Activated naive CD4-positive, alpha-beta T cell treated with anti-CD3 and anti-CD28 coated beads for 36 hours (primary cell): ENCODE measurements at regions of chr1 and their contacts with region 1.

Region 1: DNA sequence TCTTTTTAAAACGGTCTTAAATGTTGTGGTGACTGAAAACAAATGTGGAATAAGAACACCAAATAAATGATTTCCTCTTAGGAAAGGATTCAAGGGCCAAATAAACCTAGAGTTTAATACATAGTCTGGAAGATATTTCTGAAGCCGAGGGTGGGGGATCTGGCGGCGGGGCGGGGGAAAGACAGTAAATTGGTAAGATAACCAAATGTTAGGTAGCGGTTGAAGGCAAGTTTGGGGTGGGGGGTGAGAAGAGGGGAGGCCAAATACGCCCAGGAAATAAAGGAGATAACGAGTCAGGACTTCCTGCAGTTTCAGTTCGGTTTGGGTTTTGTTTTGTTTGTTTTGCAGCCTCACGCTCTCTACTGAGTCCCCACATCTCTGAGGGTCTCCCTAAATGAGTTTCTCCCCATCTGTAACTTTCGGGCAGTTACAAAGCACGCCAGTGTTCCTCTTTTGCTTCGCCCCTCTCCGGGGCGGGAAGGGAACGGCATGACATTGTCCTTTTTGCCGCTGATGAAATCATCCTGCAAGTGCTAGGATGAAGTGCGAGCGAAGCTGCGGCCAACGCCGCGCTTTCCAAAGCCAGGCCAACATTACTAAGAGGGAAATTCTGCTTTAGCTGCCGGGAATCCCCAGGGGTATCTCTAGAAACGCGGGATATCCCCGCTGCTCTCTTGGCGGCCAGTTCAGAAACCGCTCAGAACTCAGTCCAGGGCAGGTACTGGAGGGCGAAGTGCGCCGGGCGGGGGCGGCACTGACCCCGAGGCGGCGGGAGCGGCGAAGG is 844 bp downstream of the NIBAN1 start:
- DNase-seq: peak; percentile 84
- H3K4me3 Mint-ChIP-seq: peak overlapping the region; percentile 79
- H3K27ac Mint-ChIP-seq: peak overlapping the region; percentile 93
- H3K4me1 Mint-ChIP-seq: peaks cover 40% of the 10 kb centered on the region
- H3K27me3 Mint-ChIP-seq: peaks cover 25% of the 10 kb centered on the region

Region 2: DNA sequence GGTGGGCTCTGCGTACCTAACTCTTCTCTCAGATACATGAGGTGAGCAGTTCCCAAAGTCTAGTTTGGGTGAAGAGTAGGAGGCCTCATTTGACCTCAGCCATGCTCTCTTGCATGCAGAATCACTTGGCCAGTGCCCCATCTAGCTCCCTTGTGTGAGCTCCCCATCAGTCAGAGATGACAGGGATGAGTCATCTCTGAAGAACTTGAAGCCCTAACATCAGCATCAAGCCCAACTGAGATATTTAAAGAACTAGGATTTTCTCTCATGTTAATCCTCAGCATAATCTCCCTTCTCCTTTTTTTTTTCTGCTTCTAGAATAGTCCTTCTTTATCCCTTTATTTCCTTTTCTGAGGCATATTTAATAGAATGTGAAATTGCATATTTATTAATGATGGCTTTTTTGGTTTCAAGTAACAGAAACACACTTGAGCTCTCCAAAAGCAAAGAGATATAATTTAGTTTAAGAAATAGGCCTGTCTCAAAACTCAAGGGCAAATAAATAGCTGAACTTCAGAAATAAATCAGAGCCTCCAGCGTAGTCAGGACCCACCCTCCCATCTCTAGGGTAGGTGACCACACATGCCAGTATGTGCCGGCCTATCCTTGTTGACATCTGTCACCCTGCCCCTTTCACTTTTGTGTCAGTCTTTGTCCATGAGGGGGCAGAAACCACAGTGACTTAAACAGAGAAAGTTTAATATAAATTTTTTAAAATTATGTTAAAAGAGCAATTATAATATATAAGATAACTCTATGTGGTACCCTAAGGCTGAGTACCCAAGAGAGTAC is 809.6 kb before region 1 on chr1:
- CTCF ChIA-PET with region 1: no interaction called
- intact Hi-C with region 1: loop called (anchors 5 kb)
- DNase-seq: no peak
- H3K4me3 Mint-ChIP-seq: no peak overlapping the region
- H3K27ac Mint-ChIP-seq: no peak overlapping the region
- H3K4me1 Mint-ChIP-seq: no peaks in the 10 kb centered on the region
- H3K27me3 Mint-ChIP-seq: peaks cover 1% of the 10 kb centered on the region

Region 3: GRCh38 chr1:184754476-184755225 is 218.8 kb before region 1 on chr1 and contains the start of gene EDEM3:
- CTCF ChIA-PET with region 1: no interaction called
- intact Hi-C with region 1: loop called (anchors 1 kb)
- DNase-seq: peak; percentile 98
- H3K4me3 Mint-ChIP-seq: peak within 1 kb of the TSS; percentile 88
- H3K27ac Mint-ChIP-seq: peak within 1 kb of the TSS; percentile 88
- H3K4me1 Mint-ChIP-seq: peaks cover 36% of the 10 kb centered on the region
- H3K27me3 Mint-ChIP-seq: no peaks in the 10 kb centered on the region
- total RNA-seq, gene EDEM3: 9.9 to 10.5 TPM

Region 4: GRCh38 chr1:184881941-184882913 is 91.2 kb before region 1 on chr1:
- CTCF ChIA-PET with region 1: no interaction called
- intact Hi-C with region 1: loop called (anchors 1 kb)
- DNase-seq: peak; percentile 31
- H3K4me3 Mint-ChIP-seq: no peak overlapping the region
- H3K27ac Mint-ChIP-seq: peak overlapping the region; percentile 79
- H3K4me1 Mint-ChIP-seq: peaks cover 25% of the 10 kb centered on the region
- H3K27me3 Mint-ChIP-seq: peaks cover 25% of the 10 kb centered on the region

Region 5: DNA sequence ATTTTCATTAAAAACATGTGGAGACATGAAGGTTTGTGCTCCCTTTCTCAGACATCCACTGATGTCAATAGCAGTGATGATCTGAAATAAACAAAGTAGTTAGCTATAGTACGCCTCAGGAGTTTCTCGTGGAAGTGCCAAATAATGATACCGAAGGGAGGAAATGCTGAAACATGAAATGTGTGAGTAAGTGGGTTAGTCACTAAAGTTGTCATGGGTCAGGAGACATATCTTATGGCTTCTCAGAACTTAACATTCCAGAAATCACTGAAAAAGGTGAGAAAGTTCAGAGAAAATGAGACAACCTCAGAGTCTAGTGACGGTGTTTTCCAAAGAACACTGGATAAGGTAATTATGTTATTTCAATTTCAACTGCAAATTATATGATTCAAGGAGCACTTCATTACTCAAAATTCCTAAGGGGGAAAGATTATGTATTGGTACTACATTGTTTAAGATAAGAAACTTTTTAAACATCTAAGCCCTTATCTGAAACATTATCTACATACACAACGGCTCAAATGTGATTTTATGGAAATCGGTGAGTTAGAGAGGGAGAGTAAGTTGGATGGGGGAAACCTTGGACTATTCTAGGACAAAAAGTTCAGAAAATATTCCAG is 19.8 kb before region 1 on chr1:
- CTCF ChIA-PET with region 1: no interaction called
- intact Hi-C with region 1: loop called (anchors 1 kb)
- DNase-seq: no peak
- H3K4me3 Mint-ChIP-seq: no peak overlapping the region
- H3K27ac Mint-ChIP-seq: no peak overlapping the region
- H3K4me1 Mint-ChIP-seq: peaks cover 12% of the 10 kb centered on the region
- H3K27me3 Mint-ChIP-seq: peaks cover 1% of the 10 kb centered on the region

Region 6: GRCh38 chr1:185213091-185213490 is 239.6 kb after region 1 on chr1:
- CTCF ChIA-PET with region 1: no interaction called
- intact Hi-C with region 1: no loop called
- DNase-seq: no peak
- H3K4me3 Mint-ChIP-seq: no peak overlapping the region
- H3K27ac Mint-ChIP-seq: no peak overlapping the region
- H3K4me1 Mint-ChIP-seq: no peaks in the 10 kb centered on the region
- H3K27me3 Mint-ChIP-seq: no peaks in the 10 kb centered on the region

Region 7: DNA sequence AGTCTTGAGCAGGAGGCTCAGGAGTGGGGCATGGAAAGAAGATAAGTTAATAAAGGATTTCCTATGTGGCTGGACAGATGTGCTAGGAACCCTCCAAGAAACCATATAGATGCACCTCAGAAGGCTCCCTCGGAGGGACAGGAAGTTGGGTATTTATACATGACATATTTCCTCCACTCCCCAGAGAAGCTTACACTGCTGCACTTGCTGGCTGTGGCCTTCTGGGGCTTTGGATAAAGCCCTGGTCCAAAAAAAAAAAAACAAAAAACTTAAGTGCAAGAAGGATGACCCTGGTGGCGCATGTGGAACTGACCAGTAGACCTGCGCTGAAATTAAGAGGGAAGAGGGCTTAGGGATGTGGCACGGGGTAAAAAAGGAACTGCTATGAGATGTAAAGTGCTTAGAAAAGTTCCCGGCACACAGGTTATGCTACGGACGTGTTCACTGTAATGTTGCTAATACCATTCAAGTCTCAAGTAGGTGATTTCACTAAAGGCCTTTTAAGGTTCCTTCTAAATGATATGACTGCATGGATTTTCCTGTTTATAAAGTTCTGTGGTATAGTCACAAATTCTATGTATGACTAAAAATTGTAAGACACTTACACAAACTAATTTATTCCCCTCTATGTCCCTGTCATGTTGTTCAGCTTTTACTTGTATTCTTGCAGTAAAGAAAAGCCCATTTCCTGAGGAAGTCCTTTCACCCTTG is 1014.3 kb after region 1 on chr1:
- CTCF ChIA-PET with region 1: no interaction called
- intact Hi-C with region 1: loop called (anchors 5 kb)
- DNase-seq: peak; percentile 44
- H3K4me3 Mint-ChIP-seq: peak overlapping the region; percentile 69
- H3K27ac Mint-ChIP-seq: peak overlapping the region; percentile 98
- H3K4me1 Mint-ChIP-seq: peaks cover 15% of the 10 kb centered on the region
- H3K27me3 Mint-ChIP-seq: no peaks in the 10 kb centered on the region